T-cell (primary cell): ENCODE measurements at regions of chr11 and their contacts with region 1.

Region 1: GRCh38 chr11:113363406-113363805 is 24.2 kb upstream of the ANKK1 start:
- DNase-seq: no peak
- ATAC-seq: no peak
- H3K4me3 ChIP-seq: no peak overlapping the region
- H3K4me3 Mint-ChIP-seq: no peak overlapping the region
- H3K27ac ChIP-seq: no peak overlapping the region
- H3K27ac Mint-ChIP-seq: peak overlapping the region; percentile 10 to 56
- H3K4me1 ChIP-seq: peaks cover 3 to 12% of the 10 kb centered on the region in 2 experiments
- H3K4me1 Mint-ChIP-seq: peaks cover 20 to 29% (median 27%) of the 10 kb centered on the region in 3 donors
- H3K27me3 ChIP-seq: no peaks in the 10 kb centered on the region
- H3K27me3 Mint-ChIP-seq: no peaks in the 10 kb centered on the region

Region 2: DNA sequence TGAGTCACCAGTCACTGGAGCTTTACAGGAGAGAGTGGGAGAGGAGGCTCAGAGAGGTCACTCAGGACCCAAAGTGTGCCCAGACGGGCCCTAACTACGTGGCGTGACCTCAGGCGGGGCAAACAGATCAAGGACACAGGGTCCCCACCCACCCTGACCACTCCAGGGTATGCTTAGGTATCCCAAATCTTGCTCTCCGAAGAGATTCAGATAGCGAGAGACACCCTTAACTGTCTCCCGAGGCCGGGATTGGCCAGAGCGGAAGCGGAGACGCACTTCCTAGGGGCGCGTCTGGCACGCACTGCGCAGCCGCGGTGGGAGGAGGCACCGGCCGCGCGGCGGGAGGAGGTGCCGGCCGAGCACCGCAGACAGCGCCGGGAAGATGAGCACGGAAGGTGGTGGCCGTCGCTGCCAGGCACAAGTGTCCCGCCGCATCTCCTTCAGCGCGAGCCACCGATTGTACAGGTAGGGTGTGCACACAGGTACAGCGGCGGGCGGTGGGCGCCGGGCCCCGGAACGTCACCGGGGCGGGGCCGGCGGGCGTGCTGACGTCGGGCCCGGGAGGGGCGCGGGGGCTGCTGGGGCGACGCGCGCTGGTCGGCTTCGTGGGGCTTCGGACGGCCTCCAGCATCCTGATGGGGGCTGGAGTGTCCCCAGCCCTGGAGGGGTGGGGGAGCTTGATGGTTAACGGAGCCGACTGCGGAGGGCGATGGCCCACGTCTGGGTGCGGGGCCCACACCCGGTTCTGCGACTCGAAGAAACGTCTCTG is 1137.2 kb before region 1 on chr11 and contains the start of gene PTS:
- CTCF ChIA-PET with region 1: no interaction called
- POLR2A ChIA-PET with region 1: interaction called in 1 of 2 experiments, 14 read pairs
- DNase-seq: peak; percentile 68 to 91 (median 77)
- ATAC-seq: peak; percentile 90 to 95 (median 94)
- H3K4me3 ChIP-seq: peak within 1 kb of the TSS; percentile 95
- H3K4me3 Mint-ChIP-seq: peak within 1 kb of the TSS; percentile 87 to 89 (median 89)
- H3K27ac ChIP-seq: peak within 1 kb of the TSS; percentile 99
- H3K27ac Mint-ChIP-seq: peak within 1 kb of the TSS; percentile 96 to 97
- H3K4me1 ChIP-seq: peaks cover 13 to 17% of the 10 kb centered on the region in 2 experiments
- H3K4me1 Mint-ChIP-seq: peaks cover 16 to 33% (median 30%) of the 10 kb centered on the region in 3 donors
- H3K27me3 ChIP-seq: peaks cover 0 to 4% of the 10 kb centered on the region in 2 experiments
- H3K27me3 Mint-ChIP-seq: no peaks in the 10 kb centered on the region
- total RNA-seq, gene PTS: 15.1 to 65.8 (median 21.0) TPM

Region 3: GRCh38 chr11:113119966-113120736 is 243.3 kb before region 1 on chr11:
- CTCF ChIA-PET with region 1: no interaction called
- POLR2A ChIA-PET with region 1: no interaction called
- DNase-seq: no peak
- ATAC-seq: no peak
- H3K4me3 ChIP-seq: no peak overlapping the region
- H3K4me3 Mint-ChIP-seq: no peak overlapping the region
- H3K27ac ChIP-seq: no peak overlapping the region
- H3K27ac Mint-ChIP-seq: no peak overlapping the region
- H3K4me1 ChIP-seq: no peaks in the 10 kb centered on the region
- H3K4me1 Mint-ChIP-seq: no peaks in the 10 kb centered on the region
- H3K27me3 ChIP-seq: peaks cover 0 to 5% of the 10 kb centered on the region in 2 experiments
- H3K27me3 Mint-ChIP-seq: peaks cover 10 to 13% of the 10 kb centered on the region in 2 donors

Region 4: DNA sequence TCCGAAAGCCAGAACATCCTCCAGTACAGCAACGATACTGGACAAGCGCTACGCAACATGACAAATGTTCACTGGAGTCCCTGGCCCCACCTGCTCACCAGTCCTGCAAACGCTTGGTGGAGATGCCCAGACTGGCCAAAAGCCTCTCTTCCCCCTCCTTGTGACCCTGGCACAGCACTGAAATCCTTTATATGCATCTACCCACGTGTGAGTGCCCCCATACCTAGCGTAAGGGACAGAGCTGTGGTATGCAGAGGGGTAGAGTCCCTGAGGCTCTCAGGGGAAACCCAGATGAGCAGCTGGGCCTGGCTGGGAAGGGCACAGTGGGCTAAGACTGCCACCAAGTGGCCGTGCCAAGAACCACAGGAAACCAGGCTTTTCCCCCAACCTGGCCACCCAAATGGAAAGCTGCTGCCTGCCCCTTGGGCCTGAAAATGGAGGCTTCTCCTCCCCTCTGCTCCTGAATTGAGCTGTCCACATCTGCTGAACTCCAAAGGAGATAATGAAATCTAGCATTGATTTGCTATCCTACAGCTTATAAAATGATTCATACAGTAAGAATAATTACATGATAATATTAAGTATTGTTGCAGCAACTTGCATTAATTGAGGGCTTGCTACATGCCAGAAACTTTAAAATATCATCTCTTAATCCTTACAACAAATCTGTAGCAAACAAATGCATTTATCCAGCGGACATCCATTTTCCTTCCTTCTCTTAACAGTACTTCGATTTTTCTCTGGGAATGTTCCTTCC is 73.8 kb before region 1 on chr11:
- CTCF ChIA-PET with region 1: no interaction called
- POLR2A ChIA-PET with region 1: no interaction called
- DNase-seq: peak in 34 of 35 experiments; percentile 21 to 74 (median 49)
- ATAC-seq: peak; percentile 77 to 93 (median 85)
- H3K4me3 ChIP-seq: no peak overlapping the region
- H3K4me3 Mint-ChIP-seq: no peak overlapping the region
- H3K27ac ChIP-seq: no peak overlapping the region
- H3K27ac Mint-ChIP-seq: no peak overlapping the region
- H3K4me1 ChIP-seq: peaks cover 0 to 3% of the 10 kb centered on the region in 2 experiments
- H3K4me1 Mint-ChIP-seq: no peaks in the 10 kb centered on the region
- H3K27me3 ChIP-seq: peaks cover 0 to 3% of the 10 kb centered on the region in 2 experiments
- H3K27me3 Mint-ChIP-seq: peaks cover 13 to 20% of the 10 kb centered on the region in 2 donors

Region 5: DNA sequence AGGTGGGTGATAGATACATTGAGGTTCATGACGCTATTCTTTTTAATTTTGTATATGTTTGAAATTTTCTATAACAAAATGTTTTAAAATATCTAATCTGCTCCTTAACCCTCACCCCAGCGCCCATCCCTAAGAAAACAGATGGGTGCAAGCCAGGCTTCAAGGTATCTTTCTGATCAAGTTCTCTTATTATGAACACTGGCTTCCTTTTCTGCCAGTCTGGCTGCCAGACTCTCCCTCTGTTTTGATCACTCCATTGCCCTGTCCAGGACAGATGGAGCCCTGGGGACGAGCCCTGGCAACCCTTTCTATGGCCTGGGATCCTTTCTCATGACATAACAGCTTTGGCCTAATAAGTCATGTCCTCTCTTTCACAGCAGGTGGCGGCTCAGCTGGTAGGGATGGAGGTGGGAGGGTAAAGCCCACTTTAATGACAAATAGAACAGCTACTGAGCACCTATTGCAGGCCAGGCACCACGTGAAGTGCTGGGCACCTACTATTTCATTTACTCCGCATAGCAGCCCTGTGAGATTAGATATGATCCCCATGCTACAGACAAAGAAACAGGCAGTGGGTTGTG is 73.4 kb after region 1 on chr11:
- CTCF ChIA-PET with region 1: no interaction called
- POLR2A ChIA-PET with region 1: no interaction called
- DNase-seq: no peak
- ATAC-seq: no peak
- H3K4me3 ChIP-seq: no peak overlapping the region
- H3K4me3 Mint-ChIP-seq: no peak overlapping the region
- H3K27ac ChIP-seq: no peak overlapping the region
- H3K27ac Mint-ChIP-seq: no peak overlapping the region
- H3K4me1 ChIP-seq: no peaks in the 10 kb centered on the region
- H3K4me1 Mint-ChIP-seq: no peaks in the 10 kb centered on the region
- H3K27me3 ChIP-seq: no peaks in the 10 kb centered on the region
- H3K27me3 Mint-ChIP-seq: peaks cover 7 to 14% of the 10 kb centered on the region in 2 donors